GM12878 (cell line): ENCODE measurements at regions of chr7 and their contacts with region 1.

Region 1: GRCh38 chr7:130309986-130310385 is 17.0 kb downstream of the CPA4 start:
- DNase-seq: peak; percentile 79
- ATAC-seq: peak; percentile 80
- H3K4me3 ChIP-seq: no peak overlapping the region
- H3K27ac ChIP-seq: no peak overlapping the region
- H3K4me1 ChIP-seq: no peaks in the 10 kb centered on the region
- H3K27me3 ChIP-seq: no peaks in the 10 kb centered on the region
- CTCF ChIP-seq: no peak
- EP300 ChIP-seq: no peak; a peak in 1 of 4 replicates
- POLR2A ChIP-seq: no peak
- RAD21 ChIP-seq: 0 out of 2 replicates have a peak, but pooled peaks have one; percentile 3

Region 2: GRCh38 chr7:130350945-130351793 is 41.2 kb after region 1 on chr7:
- CTCF ChIA-PET with region 1: no interaction called
- POLR2A ChIA-PET with region 1: no interaction called
- RAD21 ChIA-PET with region 1: no interaction called
- SMC1A ChIA-PET with region 1: no interaction called
- in situ Hi-C with region 1: no loop called
- intact Hi-C with region 1: loop called (anchors 1 kb)
- DNase-seq: peak; percentile 46
- ATAC-seq: peak; percentile 88
- H3K4me3 ChIP-seq: no peak overlapping the region
- H3K27ac ChIP-seq: peak overlapping the region; percentile 73
- H3K4me1 ChIP-seq: peaks cover 21% of the 10 kb centered on the region
- H3K27me3 ChIP-seq: no peaks in the 10 kb centered on the region
- CTCF ChIP-seq: no peak
- EP300 ChIP-seq: no peak
- POLR2A ChIP-seq: no peak
- RAD21 ChIP-seq: peak; percentile 0; the same call in 1 of the 2 replicates